CD4-positive, alpha-beta T cell (primary cell): ENCODE measurements at regions of chr17 and their contacts with region 1.

Region 1: DNA sequence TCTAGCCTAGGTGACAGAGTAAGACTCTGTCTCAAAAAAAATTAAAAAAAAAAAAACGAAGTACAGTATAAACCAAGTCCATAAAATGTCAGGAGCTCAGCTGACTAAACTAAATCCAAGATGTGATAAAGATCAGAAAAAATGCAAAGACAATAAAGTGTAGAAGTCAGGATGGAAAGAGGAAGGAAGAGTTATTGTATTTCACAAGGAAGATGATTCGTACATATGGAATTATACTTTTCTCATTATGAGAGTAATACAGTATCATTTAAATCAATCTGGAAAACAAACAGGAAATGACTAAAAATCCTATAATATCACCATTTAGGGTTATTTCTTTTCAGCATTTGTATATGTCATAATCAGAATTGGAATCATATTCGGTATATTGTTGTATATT is 11.4 kb upstream of the APOH start:
- DNase-seq: no peak
- ATAC-seq: no peak
- H3K4me3 ChIP-seq: no peak overlapping the region
- H3K4me3 Mint-ChIP-seq: no peak overlapping the region
- H3K27ac ChIP-seq: no peak overlapping the region
- H3K27ac Mint-ChIP-seq: no peak overlapping the region
- H3K4me1 ChIP-seq: peaks cover 6% of the 10 kb centered on the region
- H3K4me1 Mint-ChIP-seq: peaks cover 18% of the 10 kb centered on the region
- H3K27me3 ChIP-seq: no peaks in the 10 kb centered on the region
- H3K27me3 Mint-ChIP-seq: no peaks in the 10 kb centered on the region
- CTCF ChIP-seq: no peak

Region 2: GRCh38 chr17:66207936-66208335 is 32.7 kb before region 1 on chr17:
- CTCF ChIA-PET with region 1: no interaction called
- POLR2A ChIA-PET with region 1: no interaction called
- intact Hi-C with region 1: loop called (anchors 5 kb)
- DNase-seq: no peak
- ATAC-seq: no peak
- H3K4me3 ChIP-seq: no peak overlapping the region
- H3K4me3 Mint-ChIP-seq: no peak overlapping the region
- H3K27ac ChIP-seq: no peak overlapping the region
- H3K27ac Mint-ChIP-seq: no peak overlapping the region
- H3K4me1 ChIP-seq: no peaks in the 10 kb centered on the region
- H3K4me1 Mint-ChIP-seq: no peaks in the 10 kb centered on the region
- H3K27me3 ChIP-seq: no peaks in the 10 kb centered on the region
- H3K27me3 Mint-ChIP-seq: no peaks in the 10 kb centered on the region
- CTCF ChIP-seq: no peak

Region 3: DNA sequence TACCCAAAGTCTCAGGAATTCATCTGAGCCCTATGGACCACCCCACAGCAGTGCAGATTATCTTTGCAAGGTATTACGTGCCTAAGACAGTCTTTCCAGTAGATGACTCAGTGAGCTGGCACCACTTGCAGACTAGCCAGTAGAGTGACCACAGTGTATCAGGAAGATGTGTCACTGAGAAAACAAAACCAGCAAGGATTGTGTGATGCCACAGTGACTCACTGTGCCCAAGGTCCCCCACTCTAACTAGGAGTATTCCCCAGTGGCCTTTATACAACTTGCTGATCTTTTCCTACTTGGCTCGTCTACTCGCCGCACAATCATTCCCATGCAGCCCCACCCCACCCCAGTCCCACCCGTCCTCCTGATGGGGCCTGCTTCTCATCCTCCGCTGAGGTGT is 35.0 kb after region 1 on chr17:
- CTCF ChIA-PET with region 1: no interaction called
- POLR2A ChIA-PET with region 1: no interaction called
- intact Hi-C with region 1: no loop called
- DNase-seq: no peak
- ATAC-seq: no peak
- H3K4me3 ChIP-seq: no peak overlapping the region
- H3K4me3 Mint-ChIP-seq: no peak overlapping the region
- H3K27ac ChIP-seq: no peak overlapping the region
- H3K27ac Mint-ChIP-seq: no peak overlapping the region
- H3K4me1 ChIP-seq: no peaks in the 10 kb centered on the region
- H3K4me1 Mint-ChIP-seq: no peaks in the 10 kb centered on the region
- H3K27me3 ChIP-seq: no peaks in the 10 kb centered on the region
- H3K27me3 Mint-ChIP-seq: no peaks in the 10 kb centered on the region
- CTCF ChIP-seq: no peak